PC-3 (cell line): ENCODE measurements at regions of chr7 and their contacts with region 1.

Region 1: DNA sequence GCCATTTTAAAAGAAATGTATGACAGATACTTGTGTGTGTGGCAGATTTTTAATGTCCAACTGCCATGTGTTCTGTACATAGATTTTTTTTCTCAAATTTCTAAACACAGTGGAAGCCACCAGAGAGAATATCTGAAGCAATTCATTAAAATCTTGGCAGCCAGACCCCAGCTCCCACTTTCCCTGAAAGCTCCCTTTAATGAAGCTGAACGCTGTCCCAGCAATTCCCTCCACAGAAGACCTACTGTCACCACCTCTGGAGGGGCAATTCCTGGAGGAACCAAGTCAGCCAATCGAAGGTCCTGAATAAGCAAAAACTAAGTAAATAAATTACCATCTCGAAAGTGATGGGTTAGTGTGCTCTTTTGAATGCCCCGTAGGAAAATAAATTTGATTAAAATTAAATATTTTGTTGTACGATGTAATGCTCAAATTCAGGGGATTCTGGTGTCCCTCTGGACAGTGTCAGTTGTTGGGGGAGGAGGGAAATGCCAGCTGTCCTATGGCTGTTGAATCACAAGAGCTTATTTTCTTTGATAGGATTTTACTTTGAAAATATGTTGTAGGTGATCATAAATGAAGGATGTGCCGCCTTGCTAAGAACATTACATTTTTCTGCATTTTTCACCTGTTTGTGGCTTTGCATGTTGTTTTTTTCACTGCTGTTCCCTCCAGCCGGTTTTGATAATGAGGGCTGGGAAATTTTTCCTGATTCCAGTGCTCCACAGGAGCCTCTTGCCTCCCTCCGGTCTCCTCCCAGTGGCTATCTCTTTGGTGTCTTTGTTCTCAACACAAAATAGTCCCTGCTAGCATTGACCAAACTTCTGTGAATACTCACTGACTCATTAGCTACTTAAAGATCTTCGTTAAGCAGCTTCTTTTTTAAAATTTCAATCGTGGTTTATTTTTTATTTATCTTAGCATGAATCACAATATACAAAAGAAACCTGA is 9.2 kb upstream of the GSAP start:
- DNase-seq: peak; percentile 91
- ATAC-seq: peak; percentile 93
- H3K4me3 ChIP-seq: peak overlapping the region; percentile 60
- H3K27ac ChIP-seq: peak overlapping the region; percentile 94
- H3K4me1 ChIP-seq: peaks cover 60% of the 10 kb centered on the region
- H3K27me3 ChIP-seq: no peaks in the 10 kb centered on the region
- CTCF ChIP-seq: no peak

Region 2: GRCh38 chr7:76372984-76373833 is 1052.2 kb before region 1 on chr7:
- CTCF ChIA-PET with region 1: no interaction called
- POLR2A ChIA-PET with region 1: no interaction called
- intact Hi-C with region 1: no loop called
- DNase-seq: peak; percentile 83
- ATAC-seq: peak; percentile 96
- H3K4me3 ChIP-seq: no peak overlapping the region
- H3K27ac ChIP-seq: peak overlapping the region; percentile 63
- H3K4me1 ChIP-seq: peaks cover 11% of the 10 kb centered on the region
- H3K27me3 ChIP-seq: no peaks in the 10 kb centered on the region
- CTCF ChIP-seq: no peak

Region 3: DNA sequence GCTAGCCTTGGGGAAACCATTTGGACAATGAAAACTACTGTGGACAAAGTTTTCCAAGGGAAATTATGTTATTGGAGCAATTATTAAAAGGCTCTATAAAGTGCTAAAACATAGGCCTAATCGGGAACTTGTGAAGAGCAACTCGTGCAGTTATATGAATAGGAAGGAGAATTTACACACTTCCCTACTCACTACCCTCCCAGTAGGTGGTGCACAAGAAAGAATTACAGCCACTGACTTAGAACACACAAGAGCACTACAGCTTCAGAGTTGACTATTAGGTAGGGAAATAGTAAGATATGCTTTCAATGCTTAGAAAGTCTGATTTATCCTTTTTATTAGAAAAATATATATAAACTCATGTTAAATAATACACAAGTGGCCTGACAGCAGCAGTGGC is 56.4 kb before region 1 on chr7:
- CTCF ChIA-PET with region 1: no interaction called
- POLR2A ChIA-PET with region 1: no interaction called
- intact Hi-C with region 1: loop called (anchors 10 kb)
- DNase-seq: peak; percentile 41
- ATAC-seq: peak; percentile 71
- H3K4me3 ChIP-seq: no peak overlapping the region
- H3K27ac ChIP-seq: no peak overlapping the region
- H3K4me1 ChIP-seq: no peaks in the 10 kb centered on the region
- H3K27me3 ChIP-seq: no peaks in the 10 kb centered on the region
- CTCF ChIP-seq: peak; percentile 54

Region 4: DNA sequence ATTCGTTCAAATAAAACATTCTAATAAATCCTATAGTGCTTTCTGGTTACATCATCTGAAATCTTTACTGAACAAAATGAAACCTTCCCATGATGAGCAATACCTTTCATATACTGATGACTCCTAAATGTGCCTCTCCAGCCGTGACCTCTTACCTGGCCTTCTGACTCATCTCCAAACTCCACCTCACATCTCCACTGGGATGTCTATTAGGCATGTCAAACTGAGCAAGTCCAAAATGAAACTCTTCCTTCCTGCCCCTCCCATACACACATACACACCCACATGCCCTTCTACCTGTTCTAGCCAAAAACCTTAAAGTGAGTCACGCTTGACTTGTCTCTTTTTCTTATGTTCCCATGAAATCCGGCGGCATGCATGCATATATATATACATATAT is 32.1 kb before region 1 on chr7:
- CTCF ChIA-PET with region 1: no interaction called
- POLR2A ChIA-PET with region 1: interaction called, 3 read pairs
- intact Hi-C with region 1: loop called (anchors 1 kb)
- DNase-seq: peak; percentile 96
- ATAC-seq: peak; percentile 98
- H3K4me3 ChIP-seq: no peak overlapping the region
- H3K27ac ChIP-seq: peak overlapping the region; percentile 88
- H3K4me1 ChIP-seq: peaks cover 25% of the 10 kb centered on the region
- H3K27me3 ChIP-seq: no peaks in the 10 kb centered on the region
- CTCF ChIP-seq: no peak

Region 5: GRCh38 chr7:77455324-77455723 is 29.9 kb after region 1 on chr7:
- CTCF ChIA-PET with region 1: no interaction called
- POLR2A ChIA-PET with region 1: interaction called, 4 read pairs
- intact Hi-C with region 1: loop called (anchors 1 kb)
- DNase-seq: peak; percentile 92
- ATAC-seq: peak; percentile 86
- H3K4me3 ChIP-seq: peak overlapping the region; percentile 47
- H3K27ac ChIP-seq: peak overlapping the region; percentile 89
- H3K4me1 ChIP-seq: peaks cover 68% of the 10 kb centered on the region
- H3K27me3 ChIP-seq: no peaks in the 10 kb centered on the region
- CTCF ChIP-seq: no peak